ENCODE measurements at regions of chr18 and their contacts with region 1.

Region 1: GRCh38 chr18:6476190-6476589 is 61.5 kb upstream of the L3MBTL4 start:
- DNase-seq: peak in 4 of 10 donors; percentile 37 to 51 (median 46)
- H3K4me3 ChIP-seq: no peak overlapping the region
- H3K27ac ChIP-seq: no peak overlapping the region
- H3K27me3 ChIP-seq: peaks cover 0 to 19% (median 0%) of the 10 kb centered on the region in 45 donors
- CTCF ChIP-seq: no peak

Region 2: GRCh38 chr18:6401687-6402086 is 74.5 kb before region 1 on chr18:
- intact Hi-C with region 1: loop called in 1 of 2 experiments (anchors 10 kb)
- DNase-seq: no peak
- H3K4me3 ChIP-seq: no peak overlapping the region
- H3K27ac ChIP-seq: no peak overlapping the region
- H3K27me3 ChIP-seq: no peaks in the 10 kb centered on the region
- CTCF ChIP-seq: peak in 29 of 56 donors; percentile 10 to 61 (median 27)